ENCODE measurements at regions of chr13 and their contacts with region 1.

Region 1: GRCh38 chr13:101757446-101758039 is 305.1 kb downstream of the ITGBL1 start:
- DNase-seq: peak; percentile 56
- H3K4me3 Mint-ChIP-seq: no peak overlapping the region
- H3K27ac Mint-ChIP-seq: no peak overlapping the region
- H3K4me1 Mint-ChIP-seq: no peaks in the 10 kb centered on the region
- H3K27me3 Mint-ChIP-seq: no peaks in the 10 kb centered on the region
- CTCF ChIP-seq: peak; percentile 69

Region 2: DNA sequence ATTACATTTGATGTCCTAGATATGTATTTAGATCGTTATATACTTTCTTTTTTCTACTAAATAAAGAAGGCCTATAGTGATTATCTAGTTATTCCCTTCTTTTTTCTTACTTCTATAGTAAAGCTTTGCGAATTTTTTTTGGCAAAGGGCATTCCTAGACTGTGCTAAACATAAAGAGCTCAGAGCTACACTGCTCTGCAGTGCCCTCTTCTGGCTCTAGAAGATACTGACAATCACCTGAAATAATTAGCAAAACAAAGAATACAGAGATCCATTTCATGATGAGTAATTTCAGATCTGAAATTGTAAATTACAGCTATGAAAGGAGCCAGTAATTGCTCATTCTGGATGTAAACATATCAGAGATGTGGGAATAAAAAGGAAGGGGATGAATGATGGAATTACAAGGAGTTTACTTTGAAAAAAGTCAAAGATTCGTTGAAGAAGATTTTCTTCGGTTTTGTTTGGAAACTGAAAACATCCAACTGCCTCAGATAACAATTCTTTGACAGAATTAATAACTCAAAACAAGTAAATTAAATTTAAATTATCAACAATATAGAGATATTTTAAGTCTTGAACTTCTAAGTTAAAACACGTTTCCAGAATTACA is 629.7 kb before region 1 on chr13:
- CTCF ChIA-PET with region 1: interaction called, 10 read pairs
- POLR2A ChIA-PET with region 1: no interaction called
- intact Hi-C with region 1: no loop called
- DNase-seq: peak; percentile 73
- H3K4me3 Mint-ChIP-seq: no peak overlapping the region
- H3K27ac Mint-ChIP-seq: no peak overlapping the region
- H3K4me1 Mint-ChIP-seq: no peaks in the 10 kb centered on the region
- H3K27me3 Mint-ChIP-seq: peaks cover 20% of the 10 kb centered on the region
- CTCF ChIP-seq: peak; percentile 85

Region 3: GRCh38 chr13:101514788-101515187 is 242.8 kb before region 1 on chr13:
- CTCF ChIA-PET with region 1: interaction called, 56 read pairs
- POLR2A ChIA-PET with region 1: interaction called, 6 read pairs
- intact Hi-C with region 1: loop called (anchors 1 kb)
- DNase-seq: peak; percentile 78
- H3K4me3 Mint-ChIP-seq: no peak overlapping the region
- H3K27ac Mint-ChIP-seq: peak overlapping the region; percentile 12
- H3K4me1 Mint-ChIP-seq: peaks cover 16% of the 10 kb centered on the region
- H3K27me3 Mint-ChIP-seq: no peaks in the 10 kb centered on the region
- CTCF ChIP-seq: peak; percentile 58

Region 4: GRCh38 chr13:101649490-101650126 is 107.9 kb before region 1 on chr13:
- CTCF ChIA-PET with region 1: no interaction called
- POLR2A ChIA-PET with region 1: interaction called, 4 read pairs
- intact Hi-C with region 1: loop called (anchors 10 kb)
- DNase-seq: peak; percentile 93
- H3K4me3 Mint-ChIP-seq: peak overlapping the region; percentile 40
- H3K27ac Mint-ChIP-seq: peak overlapping the region; percentile 76
- H3K4me1 Mint-ChIP-seq: peaks cover 21% of the 10 kb centered on the region
- H3K27me3 Mint-ChIP-seq: no peaks in the 10 kb centered on the region
- CTCF ChIP-seq: no peak

Region 5: GRCh38 chr13:101706651-101707050 is 50.9 kb before region 1 on chr13:
- CTCF ChIA-PET with region 1: interaction called, 10 read pairs
- POLR2A ChIA-PET with region 1: interaction called, 4 read pairs
- intact Hi-C with region 1: no loop called
- DNase-seq: peak; percentile 99
- H3K4me3 Mint-ChIP-seq: no peak overlapping the region
- H3K27ac Mint-ChIP-seq: peak overlapping the region; percentile 80
- H3K4me1 Mint-ChIP-seq: peaks cover 32% of the 10 kb centered on the region
- H3K27me3 Mint-ChIP-seq: no peaks in the 10 kb centered on the region
- CTCF ChIP-seq: no peak

Region 6: GRCh38 chr13:102367816-102368215 is 610.3 kb after region 1 on chr13:
- CTCF ChIA-PET with region 1: no interaction called
- POLR2A ChIA-PET with region 1: no interaction called
- intact Hi-C with region 1: no loop called
- DNase-seq: no peak
- H3K4me3 Mint-ChIP-seq: no peak overlapping the region
- H3K27ac Mint-ChIP-seq: no peak overlapping the region
- H3K4me1 Mint-ChIP-seq: no peaks in the 10 kb centered on the region
- H3K27me3 Mint-ChIP-seq: no peaks in the 10 kb centered on the region
- CTCF ChIP-seq: no peak